ENCODE measurements at regions of chr2 and their contacts with region 1.

Region 1: GRCh38 chr2:60794277-60794863 is 38.3 kb downstream of the PAPOLG start:
- DNase-seq: no peak
- ATAC-seq: no peak
- H3K4me3 ChIP-seq: no peak overlapping the region
- H3K27ac ChIP-seq: no peak overlapping the region
- H3K4me1 ChIP-seq: no peaks in the 10 kb centered on the region
- H3K27me3 ChIP-seq: no peaks in the 10 kb centered on the region
- CTCF ChIP-seq: peak in 5 of 7 experiments; percentile 41 to 57 (median 48)
- POLR2A ChIP-seq: no peak

Region 2: GRCh38 chr2:61006486-61007105 is 212.2 kb after region 1 on chr2:
- intact Hi-C with region 1: loop called (anchors 10 kb)
- DNase-seq: no peak
- ATAC-seq: peak; percentile 79
- H3K4me3 ChIP-seq: no peak overlapping the region
- H3K27ac ChIP-seq: peak overlapping the region in 3 of 4 donors; percentile 57 to 73 (median 62)
- H3K4me1 ChIP-seq: peaks cover 26% of the 10 kb centered on the region
- H3K27me3 ChIP-seq: no peaks in the 10 kb centered on the region
- CTCF ChIP-seq: no peak
- POLR2A ChIP-seq: no peak